Psoas muscle (tissue), 8 donors: ENCODE measurements at regions of chr18 and their contacts with region 1.

Region 1: GRCh38 chr18:7512348-7512747 is 54.8 kb upstream of the PTPRM start:
- DNase-seq: no peak
- ATAC-seq: peak in 2 of 4 donors; percentile 37 to 57
- H3K4me3 ChIP-seq: no peak overlapping the region
- H3K27ac ChIP-seq: no peak overlapping the region
- H3K4me1 ChIP-seq: no peaks in the 10 kb centered on the region
- H3K27me3 ChIP-seq: no peaks in the 10 kb centered on the region
- CTCF ChIP-seq: no peak

Region 2: DNA sequence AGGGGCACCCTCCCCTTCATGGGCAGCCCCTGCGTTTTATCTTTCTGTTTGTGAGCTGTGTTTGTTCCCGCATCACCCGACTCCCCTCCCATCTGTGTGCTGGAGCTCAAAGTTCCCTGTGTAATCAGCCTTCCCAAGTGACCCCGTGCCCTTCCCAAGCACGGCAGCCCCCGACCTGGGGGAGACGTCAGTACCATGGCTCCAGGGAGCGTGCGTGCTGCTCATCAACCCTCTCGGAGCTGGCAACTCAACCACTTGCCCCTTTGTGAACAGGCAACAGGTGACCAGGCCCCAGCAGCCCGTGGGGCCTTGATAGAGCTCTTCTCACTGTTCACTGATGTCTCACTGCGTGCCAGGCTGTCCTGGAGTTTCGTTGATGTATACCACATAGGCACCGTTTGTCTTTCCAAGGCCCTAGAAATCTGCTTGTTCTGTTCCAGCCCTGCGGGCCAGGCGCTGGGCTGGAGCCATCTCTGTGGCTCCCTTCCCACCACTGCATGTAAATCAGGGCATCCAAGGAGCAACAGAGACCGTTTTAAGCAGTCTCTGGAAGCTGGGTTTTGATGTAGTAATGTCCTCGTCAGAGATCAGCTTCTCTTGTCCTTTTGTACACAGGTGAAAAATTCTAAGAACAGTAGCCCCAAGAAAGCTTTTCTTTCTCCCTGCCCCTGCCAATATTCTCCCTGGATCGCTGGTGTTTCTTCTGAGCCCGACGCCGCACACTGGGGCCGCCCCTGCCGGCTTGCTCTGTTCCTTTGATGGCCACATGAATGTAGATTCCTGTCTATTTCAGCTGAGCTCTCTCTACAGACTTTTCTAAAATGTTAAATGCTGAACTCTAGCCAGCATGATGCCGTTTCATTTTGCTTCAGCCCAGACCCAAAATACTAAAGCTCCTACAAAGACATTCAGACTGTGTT is 52.2 kb before region 1 on chr18:
- intact Hi-C with region 1: loop called in 1 of 2 experiments (anchors 10 kb)
- DNase-seq: no peak
- ATAC-seq: peak in 3 of 4 donors; percentile 25 to 58 (median 34)
- H3K4me3 ChIP-seq: peak overlapping the region; percentile 26
- H3K27ac ChIP-seq: no peak overlapping the region
- H3K4me1 ChIP-seq: peaks cover 7% of the 10 kb centered on the region
- H3K27me3 ChIP-seq: no peaks in the 10 kb centered on the region
- CTCF ChIP-seq: no peak

Region 3: DNA sequence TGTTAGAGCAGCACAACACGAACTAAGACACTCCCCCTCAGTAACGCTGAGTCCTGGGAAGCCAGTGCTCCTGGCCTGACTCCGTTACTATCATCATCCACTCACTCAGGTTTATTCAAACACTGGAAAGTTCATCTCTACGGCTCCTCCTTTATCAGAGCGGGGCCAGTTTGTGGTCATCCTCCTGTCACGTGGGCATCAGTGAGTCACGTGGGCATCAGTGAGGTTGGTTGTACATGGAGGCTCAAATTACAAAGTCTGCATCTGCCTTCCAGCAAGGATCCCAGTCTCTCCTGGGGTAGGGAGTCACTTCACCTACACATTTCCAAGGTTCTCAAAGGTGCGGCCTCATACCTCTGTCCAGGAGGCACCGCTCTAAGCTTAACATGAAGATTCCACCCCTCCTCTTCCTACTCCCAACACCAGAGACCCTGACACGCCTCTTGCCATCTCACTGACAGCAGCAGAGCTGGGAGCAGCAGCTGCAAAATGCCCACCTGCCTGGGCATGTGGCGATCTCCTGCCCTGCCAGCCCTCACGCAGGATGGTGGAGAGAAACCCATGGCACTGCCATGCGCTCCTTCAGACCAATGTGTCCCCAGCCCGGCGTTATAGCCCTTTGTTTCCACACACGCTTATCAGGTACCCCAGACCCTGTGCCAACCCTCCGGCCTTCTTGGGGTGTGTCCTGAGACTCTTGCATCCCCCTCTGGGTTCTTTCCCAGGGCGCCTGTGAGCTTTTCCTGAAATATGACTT is 44.5 kb before region 1 on chr18:
- intact Hi-C with region 1: loop called (anchors 2 to 10 kb)
- DNase-seq: no peak
- ATAC-seq: no peak
- H3K4me3 ChIP-seq: no peak overlapping the region
- H3K27ac ChIP-seq: no peak overlapping the region
- H3K4me1 ChIP-seq: peaks cover 2% of the 10 kb centered on the region
- H3K27me3 ChIP-seq: no peaks in the 10 kb centered on the region
- CTCF ChIP-seq: no peak

Region 4: GRCh38 chr18:7545734-7546133 is 33.4 kb after region 1 on chr18:
- intact Hi-C with region 1: no loop called
- DNase-seq: no peak
- ATAC-seq: no peak
- H3K4me3 ChIP-seq: no peak overlapping the region
- H3K27ac ChIP-seq: no peak overlapping the region
- H3K4me1 ChIP-seq: no peaks in the 10 kb centered on the region
- H3K27me3 ChIP-seq: no peaks in the 10 kb centered on the region
- CTCF ChIP-seq: no peak

Region 5: GRCh38 chr18:8217051-8217564 is 704.8 kb after region 1 on chr18:
- intact Hi-C with region 1: no loop called
- DNase-seq: no peak
- ATAC-seq: no peak
- H3K4me3 ChIP-seq: no peak overlapping the region
- H3K27ac ChIP-seq: no peak overlapping the region
- H3K4me1 ChIP-seq: no peaks in the 10 kb centered on the region
- H3K27me3 ChIP-seq: no peaks in the 10 kb centered on the region
- CTCF ChIP-seq: no peak